ENCODE measurements at regions of chr1 and their contacts with region 1.

Region 1: DNA sequence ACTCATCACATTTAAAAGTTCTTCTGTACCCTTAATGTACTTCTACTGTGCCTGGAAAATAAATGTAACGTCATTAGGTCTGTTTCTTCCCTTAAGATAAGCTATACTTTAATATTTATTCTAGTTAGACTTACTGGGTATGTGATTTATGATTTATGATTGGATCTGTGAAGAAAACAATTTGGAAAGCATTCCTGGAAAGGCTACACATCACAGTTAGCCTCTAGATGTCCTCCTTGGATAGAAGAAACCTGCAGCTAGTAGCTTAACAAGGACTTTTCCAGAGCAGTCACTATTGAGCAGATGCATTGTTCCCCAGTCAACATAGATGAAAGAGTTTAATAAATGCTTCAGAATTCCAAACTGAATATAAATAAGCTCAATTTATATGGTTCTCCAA is 22.2 kb upstream of the ABL2 start:
- DNase-seq: peak; percentile 48
- H3K4me3 ChIP-seq: no peak overlapping the region
- H3K27ac ChIP-seq: no peak overlapping the region
- H3K4me1 ChIP-seq: peaks cover 8% of the 10 kb centered on the region
- H3K27me3 ChIP-seq: no peaks in the 10 kb centered on the region
- CTCF ChIP-seq: peak in 1 of 2 donors; percentile 34
- POLR2A ChIP-seq: no peak

Region 2: DNA sequence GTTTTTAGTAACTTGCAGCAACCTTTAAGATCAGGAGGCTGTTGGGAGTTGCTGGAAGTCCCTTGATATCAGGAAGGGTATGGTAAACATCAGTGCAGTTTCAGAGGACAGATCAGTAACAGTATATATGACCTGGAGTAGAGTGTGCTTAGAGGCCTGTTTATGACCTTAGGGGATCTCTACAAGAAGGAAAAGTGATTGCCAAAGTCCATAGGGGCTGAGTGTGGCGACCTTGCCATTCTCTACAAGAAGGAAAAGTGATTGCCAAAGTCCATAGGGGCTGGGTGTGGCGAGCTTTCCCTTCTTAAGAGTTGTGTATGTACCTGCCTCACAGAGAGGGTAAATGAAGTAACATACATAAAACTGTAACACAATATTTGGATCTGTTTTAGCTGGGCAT is 85.6 kb after region 1 on chr1:
- CTCF ChIA-PET with region 1: no interaction called
- POLR2A ChIA-PET with region 1: no interaction called
- dilution Hi-C with region 1: no loop called
- intact Hi-C with region 1: no loop called
- DNase-seq: no peak
- H3K4me3 ChIP-seq: no peak overlapping the region
- H3K27ac ChIP-seq: no peak overlapping the region
- H3K4me1 ChIP-seq: peaks cover 2% of the 10 kb centered on the region
- H3K27me3 ChIP-seq: no peaks in the 10 kb centered on the region
- CTCF ChIP-seq: no peak
- POLR2A ChIP-seq: no peak

Region 3: GRCh38 chr1:179447489-179447888 is 195.8 kb after region 1 on chr1:
- CTCF ChIA-PET with region 1: interaction called, 24 read pairs
- POLR2A ChIA-PET with region 1: no interaction called
- dilution Hi-C with region 1: no loop called
- intact Hi-C with region 1: no loop called
- DNase-seq: peak; percentile 4
- H3K4me3 ChIP-seq: no peak overlapping the region
- H3K27ac ChIP-seq: no peak overlapping the region
- H3K4me1 ChIP-seq: no peaks in the 10 kb centered on the region
- H3K27me3 ChIP-seq: no peaks in the 10 kb centered on the region
- CTCF ChIP-seq: peak in 1 of 2 donors; percentile 28
- POLR2A ChIP-seq: no peak

Region 4: GRCh38 chr1:179599623-179600249 is 348.1 kb after region 1 on chr1:
- CTCF ChIA-PET with region 1: interaction called, 17 read pairs
- POLR2A ChIA-PET with region 1: no interaction called
- dilution Hi-C with region 1: no loop called
- intact Hi-C with region 1: loop called (anchors 10 kb)
- DNase-seq: peak; percentile 40
- H3K4me3 ChIP-seq: no peak overlapping the region
- H3K27ac ChIP-seq: no peak overlapping the region
- H3K4me1 ChIP-seq: no peaks in the 10 kb centered on the region
- H3K27me3 ChIP-seq: peaks cover 3 to 9% of the 10 kb centered on the region in 2 experiments
- CTCF ChIP-seq: peak in 1 of 2 donors; percentile 28
- POLR2A ChIP-seq: no peak